GM12878 (cell line): ENCODE measurements at regions of chr9 and their contacts with region 1.

Region 1: DNA sequence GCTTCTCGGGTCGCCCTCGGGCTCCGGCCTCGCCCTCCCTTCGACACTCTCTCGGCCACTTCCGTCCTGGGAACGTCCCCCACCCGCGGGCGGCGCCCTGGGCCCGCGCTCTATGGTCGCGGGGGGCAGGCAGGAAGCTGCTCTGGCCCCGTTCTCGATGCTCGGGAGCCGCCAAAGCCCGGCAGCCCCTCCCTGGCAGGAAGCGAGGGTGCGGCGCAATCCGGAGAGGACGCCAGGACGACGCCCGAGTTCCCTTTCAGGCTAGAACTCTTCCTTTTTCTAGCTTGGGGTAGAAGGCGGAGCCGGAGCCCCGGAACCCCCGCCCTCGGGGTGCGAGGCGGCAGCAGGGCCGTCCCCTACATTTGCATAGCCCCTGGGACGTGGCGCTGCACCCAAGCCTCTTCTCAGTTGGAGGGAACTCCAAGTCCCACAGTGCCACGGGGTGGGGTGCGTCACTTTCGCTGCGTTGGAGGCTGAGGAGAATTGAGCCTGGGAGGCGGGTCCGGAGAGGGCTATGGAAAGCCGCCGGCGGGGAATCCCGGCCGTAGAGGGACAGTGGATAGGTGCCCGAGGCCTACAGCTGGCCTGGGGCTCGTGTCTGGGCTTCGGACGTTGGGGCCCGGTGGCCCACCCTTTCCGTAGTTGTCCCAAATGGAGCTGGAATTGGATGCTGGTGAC is at the starts of genes CREB3 and TLN1:
- DNase-seq: peak; percentile 91
- ATAC-seq: peak; percentile 86
- H3K4me3 ChIP-seq: peak within 1 kb of the TSS; percentile 93
- H3K27ac ChIP-seq: peak within 1 kb of the TSS; percentile 92
- H3K4me1 ChIP-seq: peaks cover 18% of the 10 kb centered on the region
- H3K27me3 ChIP-seq: no peaks in the 10 kb centered on the region
- CTCF ChIP-seq: peak in 2 of 3 experiments; percentile 20 to 49; a peak in 2 of 6 replicates
- EP300 ChIP-seq: peak in 1 of 2 experiments; percentile 12; a peak in 2 of 4 replicates
- POLR2A ChIP-seq: peak; percentile 84; the same call in 1 of the 2 replicates
- RAD21 ChIP-seq: no peak
- polyA plus RNA-seq, gene CREB3: 9.8 to 14.1 TPM
- polyA plus RNA-seq, gene TLN1: 11.6 to 13.2 TPM

Region 2: DNA sequence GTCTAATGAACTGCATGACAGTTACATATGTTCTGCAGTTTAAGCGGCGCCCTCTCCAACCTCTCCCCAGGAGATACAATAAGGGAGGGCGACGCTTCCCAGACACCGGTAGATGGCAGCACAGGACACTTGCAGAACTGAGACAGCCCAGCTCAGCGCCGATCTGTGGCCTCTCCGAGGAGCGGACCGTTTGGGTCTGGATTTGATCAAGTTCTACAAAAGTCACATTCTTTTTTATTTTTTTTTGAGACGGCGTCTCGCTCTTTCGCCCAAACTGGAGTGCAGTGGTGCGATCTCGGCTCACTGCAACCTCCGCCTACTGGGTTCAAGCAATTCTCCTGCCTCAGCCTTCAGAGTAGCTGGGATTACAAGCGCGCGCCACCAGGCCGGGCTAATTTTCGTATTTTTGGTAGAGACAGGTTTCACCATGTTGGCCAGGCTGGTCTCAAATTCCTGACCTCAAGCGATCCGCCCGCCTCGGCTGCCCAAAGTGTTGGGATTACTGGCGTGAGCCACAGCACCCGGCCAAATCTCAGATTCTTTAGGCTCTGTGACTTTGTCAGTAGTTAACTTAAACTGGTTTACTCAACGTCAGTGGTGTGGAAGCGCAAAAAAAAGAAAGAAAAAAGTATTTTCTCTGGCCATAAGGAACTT is 615.2 kb before region 1 on chr9:
- CTCF ChIA-PET with region 1: interaction called, 3 read pairs
- POLR2A ChIA-PET with region 1: interaction called, 5 read pairs
- RAD21 ChIA-PET with region 1: interaction called, 3 read pairs
- SMC1A ChIA-PET with region 1: no interaction called
- in situ Hi-C with region 1: no loop called
- intact Hi-C with region 1: loop called (anchors 10 kb)
- DNase-seq: no peak
- ATAC-seq: peak; percentile 79
- H3K4me3 ChIP-seq: no peak overlapping the region
- H3K27ac ChIP-seq: no peak overlapping the region
- H3K4me1 ChIP-seq: peaks cover 24% of the 10 kb centered on the region
- H3K27me3 ChIP-seq: no peaks in the 10 kb centered on the region
- CTCF ChIP-seq: peak; percentile 93 to 98 (median 95); a peak in 5 of 6 replicates
- EP300 ChIP-seq: no peak
- POLR2A ChIP-seq: no peak
- RAD21 ChIP-seq: peak; percentile 92

Region 3: DNA sequence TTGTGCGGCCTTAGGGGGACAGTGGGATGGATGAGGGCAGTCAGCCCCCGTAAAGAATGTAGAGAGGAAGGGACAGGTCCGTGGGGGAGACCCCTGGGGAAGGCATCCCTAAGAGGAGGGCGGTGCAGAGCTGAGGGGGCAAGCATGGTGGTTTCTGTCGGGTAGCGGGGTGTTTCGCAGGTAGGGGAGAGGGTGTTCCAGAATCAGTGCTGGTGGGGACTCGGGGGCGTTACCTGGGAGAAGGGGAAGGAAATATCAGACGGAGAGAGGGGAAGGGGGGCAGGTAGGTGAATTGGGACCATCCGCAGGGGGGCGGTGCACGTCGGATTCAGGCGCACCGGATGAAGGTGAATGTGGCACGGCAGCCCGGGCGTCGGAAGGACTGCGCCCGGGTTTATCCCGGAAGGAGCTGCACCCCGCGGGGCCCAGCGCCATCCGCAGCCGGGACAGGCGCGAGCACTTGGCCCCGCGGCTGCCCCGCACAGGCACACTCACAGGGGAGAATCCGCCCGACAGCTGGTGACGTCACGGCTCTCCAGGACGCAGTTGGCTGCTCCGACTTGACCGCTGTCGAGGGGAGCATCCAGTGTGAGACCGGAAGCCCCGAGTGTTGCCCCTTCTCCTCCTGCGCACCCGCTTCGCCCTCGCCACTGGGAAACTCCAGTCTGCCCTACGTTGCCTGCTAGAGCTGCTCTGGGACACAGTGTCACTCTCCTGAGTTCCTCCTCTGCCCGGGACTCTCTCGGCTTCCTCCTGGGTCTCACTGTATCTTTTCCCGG is 115.4 kb before region 1 on chr9:
- CTCF ChIA-PET with region 1: interaction called, 20 read pairs
- POLR2A ChIA-PET with region 1: interaction called, 16 read pairs
- RAD21 ChIA-PET with region 1: interaction called, 17 read pairs
- SMC1A ChIA-PET with region 1: interaction called, 14 read pairs
- in situ Hi-C with region 1: no loop called
- intact Hi-C with region 1: no loop called
- DNase-seq: no peak
- ATAC-seq: peak; percentile 71
- H3K4me3 ChIP-seq: peak overlapping the region; percentile 72
- H3K27ac ChIP-seq: peak overlapping the region; percentile 57
- H3K4me1 ChIP-seq: peaks cover 44% of the 10 kb centered on the region
- H3K27me3 ChIP-seq: no peaks in the 10 kb centered on the region; a peak in 1 of 4 replicates
- CTCF ChIP-seq: peak; percentile 21 to 37 (median 34); a peak in 4 of 6 replicates
- EP300 ChIP-seq: no peak
- POLR2A ChIP-seq: peak; percentile 80
- RAD21 ChIP-seq: 0 out of 2 replicates have a peak, but pooled peaks have one; percentile 31

Region 4: GRCh38 chr9:35664531-35665470 is 67.5 kb before region 1 on chr9 and contains the start of gene ARHGEF39:
- CTCF ChIA-PET with region 1: interaction called, 183 read pairs
- POLR2A ChIA-PET with region 1: interaction called, 163 read pairs
- RAD21 ChIA-PET with region 1: interaction called, 41 read pairs
- SMC1A ChIA-PET with region 1: interaction called, 145 read pairs
- in situ Hi-C with region 1: no loop called
- intact Hi-C with region 1: no loop called
- DNase-seq: no peak
- ATAC-seq: peak; percentile 92
- H3K4me3 ChIP-seq: peak within 1 kb of the TSS; percentile 79
- H3K27ac ChIP-seq: peak within 1 kb of the TSS; percentile 85
- H3K4me1 ChIP-seq: peaks cover 33% of the 10 kb centered on the region
- H3K27me3 ChIP-seq: no peaks in the 10 kb centered on the region
- CTCF ChIP-seq: peak; percentile 15 to 44 (median 18); a peak in 3 of 6 replicates
- EP300 ChIP-seq: no peak
- POLR2A ChIP-seq: peak; percentile 83
- RAD21 ChIP-seq: 0 out of 2 replicates have a peak, but pooled peaks have one; percentile 7
- polyA plus RNA-seq, gene ARHGEF39: 2.0 to 5.0 TPM

Region 5: GRCh38 chr9:35716230-35716629 is 16.0 kb before region 1 on chr9:
- CTCF ChIA-PET with region 1: interaction called, 39 read pairs
- POLR2A ChIA-PET with region 1: interaction called, 14 read pairs
- RAD21 ChIA-PET with region 1: interaction called, 5 read pairs
- SMC1A ChIA-PET with region 1: interaction called, 10 read pairs
- in situ Hi-C with region 1: no loop called
- intact Hi-C with region 1: no loop called
- DNase-seq: no peak
- ATAC-seq: no peak
- H3K4me3 ChIP-seq: no peak overlapping the region
- H3K27ac ChIP-seq: no peak overlapping the region
- H3K4me1 ChIP-seq: peaks cover 14% of the 10 kb centered on the region
- H3K27me3 ChIP-seq: no peaks in the 10 kb centered on the region
- CTCF ChIP-seq: no peak
- EP300 ChIP-seq: no peak
- POLR2A ChIP-seq: no peak; the same call in 1 of the 2 replicates
- RAD21 ChIP-seq: no peak

Region 6: DNA sequence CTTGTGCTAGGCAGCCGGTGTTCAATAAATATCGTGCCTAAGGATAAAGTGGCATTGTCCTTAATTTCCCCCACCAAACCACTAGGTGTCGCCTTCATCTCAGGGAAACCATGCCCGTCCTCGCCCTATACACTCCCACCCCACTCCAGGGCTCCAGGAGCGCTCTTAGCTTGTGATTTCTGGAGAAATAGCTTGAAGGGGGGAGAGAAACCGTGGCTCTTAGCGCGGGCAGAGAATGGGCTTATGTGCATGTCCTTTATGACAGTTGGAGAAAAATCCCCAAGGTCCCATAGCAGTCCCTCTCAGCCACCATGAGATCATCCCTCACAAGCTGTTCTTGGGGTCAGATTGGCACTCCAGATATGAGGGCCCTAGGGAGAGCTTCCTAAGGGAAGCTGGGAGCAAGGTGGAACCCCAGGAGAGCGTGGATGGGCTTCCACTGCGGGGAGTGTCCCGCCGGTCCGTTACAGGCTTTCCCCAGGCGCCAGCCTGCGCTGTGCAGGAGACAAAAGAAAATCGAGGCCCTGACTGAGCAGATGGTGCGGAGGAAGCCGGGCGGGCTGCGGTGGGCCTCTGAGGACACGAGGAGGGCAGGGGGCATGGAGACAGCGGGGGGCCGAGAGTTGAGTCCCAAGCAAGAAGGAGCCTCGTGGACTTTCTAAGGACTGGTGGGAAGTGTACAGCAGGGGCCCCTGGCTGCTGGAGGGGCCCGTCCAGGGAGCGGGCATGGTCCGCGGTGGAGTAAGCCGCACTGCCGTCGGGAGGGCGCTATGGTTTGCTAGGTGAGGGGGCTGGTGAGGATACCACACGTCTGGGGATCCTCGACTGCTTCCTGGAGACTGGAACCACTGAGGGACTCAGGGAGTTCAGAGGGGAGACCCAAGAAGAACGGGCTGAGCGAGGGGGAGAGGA is 58.4 kb after region 1 on chr9:
- CTCF ChIA-PET with region 1: interaction called, 13 read pairs
- POLR2A ChIA-PET with region 1: no interaction called
- RAD21 ChIA-PET with region 1: interaction called, 5 read pairs
- SMC1A ChIA-PET with region 1: interaction called, 3 read pairs
- in situ Hi-C with region 1: no loop called
- intact Hi-C with region 1: no loop called
- DNase-seq: no peak
- ATAC-seq: peak; percentile 98
- H3K4me3 ChIP-seq: no peak overlapping the region
- H3K27ac ChIP-seq: no peak overlapping the region
- H3K4me1 ChIP-seq: no peaks in the 10 kb centered on the region
- H3K27me3 ChIP-seq: no peaks in the 10 kb centered on the region
- CTCF ChIP-seq: peak; percentile 84 to 94 (median 91)
- EP300 ChIP-seq: no peak
- POLR2A ChIP-seq: no peak
- RAD21 ChIP-seq: peak; percentile 83

Region 7: DNA sequence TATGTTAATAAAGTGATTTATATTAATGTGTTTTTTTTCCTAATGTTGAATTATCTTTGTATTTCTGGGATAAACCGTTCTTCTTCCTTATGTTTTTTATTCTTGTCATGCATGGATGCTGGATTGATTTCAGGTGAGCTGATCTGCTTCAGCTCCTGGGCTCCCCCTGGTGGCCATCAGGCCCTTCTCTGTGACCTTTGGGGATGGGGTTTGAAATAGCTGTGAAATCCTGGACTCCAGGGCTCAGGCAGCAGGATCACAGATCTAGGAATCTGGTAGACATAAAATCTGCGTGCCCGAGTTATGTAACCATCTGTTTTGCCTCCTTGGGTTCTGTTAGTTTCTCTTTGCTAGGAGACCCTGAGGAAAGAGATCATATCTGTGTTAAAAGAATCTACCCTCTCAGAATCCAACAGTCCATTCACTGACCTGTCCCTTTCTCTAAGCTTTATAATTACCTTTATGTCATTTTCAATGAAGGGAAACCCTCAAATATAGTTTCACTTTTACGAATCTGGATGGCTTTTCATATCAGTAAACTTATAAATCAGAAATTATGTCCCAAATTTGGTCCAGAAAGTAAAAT is 150.1 kb after region 1 on chr9:
- CTCF ChIA-PET with region 1: interaction called, 23 read pairs
- POLR2A ChIA-PET with region 1: no interaction called
- RAD21 ChIA-PET with region 1: interaction called, 6 read pairs
- SMC1A ChIA-PET with region 1: interaction called, 5 read pairs
- in situ Hi-C with region 1: no loop called
- intact Hi-C with region 1: loop called (anchors 5 kb)
- DNase-seq: peak; percentile 20
- ATAC-seq: peak; percentile 83
- H3K4me3 ChIP-seq: no peak overlapping the region
- H3K27ac ChIP-seq: no peak overlapping the region
- H3K4me1 ChIP-seq: no peaks in the 10 kb centered on the region
- H3K27me3 ChIP-seq: no peaks in the 10 kb centered on the region
- CTCF ChIP-seq: peak; percentile 93 to 96 (median 93)
- EP300 ChIP-seq: no peak
- POLR2A ChIP-seq: no peak
- RAD21 ChIP-seq: peak; percentile 97